K562 (cell line): ENCODE measurements at regions of chrX and their contacts with region 1.

Region 1: DNA sequence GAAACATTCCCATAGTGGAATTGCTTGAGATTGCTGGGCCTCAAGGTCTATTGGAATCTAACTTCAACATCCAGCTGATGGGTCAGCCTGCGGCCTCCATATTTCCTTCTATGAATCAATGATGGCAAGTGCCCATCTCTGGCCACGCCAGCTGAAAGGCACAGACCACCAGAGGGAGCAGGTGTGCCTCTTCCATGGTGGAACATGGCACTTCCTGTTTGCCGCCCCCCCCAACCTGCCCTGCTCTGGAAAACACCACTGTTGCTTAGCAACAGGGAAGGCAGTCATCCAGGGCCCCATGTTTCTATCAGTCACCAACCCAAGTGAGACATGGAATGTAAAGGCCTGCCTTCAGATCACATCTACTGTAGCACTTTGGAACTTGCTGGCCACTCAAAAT is 11.6 kb downstream of the PAGE4 start:
- DNase-seq: peak; percentile 68 to 81 (median 71)
- ATAC-seq: peak; percentile 91
- H3K4me3 ChIP-seq: no peak overlapping the region
- H3K27ac ChIP-seq: no peak overlapping the region
- H3K4me1 ChIP-seq: peaks cover 0 to 10% of the 10 kb centered on the region in 2 experiments; a peak in 2 of 5 replicates
- H3K27me3 ChIP-seq: no peaks in the 10 kb centered on the region
- CTCF ChIP-seq: peak; percentile 80 to 82 (median 82)
- EP300 ChIP-seq: no peak
- POLR2A ChIP-seq: no peak
- RAD21 ChIP-seq: peak; percentile 74 to 80

Region 2: GRCh38 chrX:49761481-49761880 is 79.2 kb before region 1 on chrX:
- CTCF ChIA-PET with region 1: no interaction called
- POLR2A ChIA-PET with region 1: no interaction called
- in situ Hi-C with region 1: no loop called
- intact Hi-C with region 1: loop called (anchors 5 kb)
- DNase-seq: peak; percentile 20 to 32 (median 26)
- ATAC-seq: peak; percentile 74
- H3K4me3 ChIP-seq: no peak overlapping the region
- H3K27ac ChIP-seq: no peak overlapping the region
- H3K4me1 ChIP-seq: no peaks in the 10 kb centered on the region
- H3K27me3 ChIP-seq: no peaks in the 10 kb centered on the region
- CTCF ChIP-seq: peak; percentile 49 to 65 (median 56); a peak in 5 of 6 replicates
- EP300 ChIP-seq: no peak
- POLR2A ChIP-seq: no peak
- RAD21 ChIP-seq: peak; percentile 25 to 56; a peak in 3 of 4 replicates

Region 3: DNA sequence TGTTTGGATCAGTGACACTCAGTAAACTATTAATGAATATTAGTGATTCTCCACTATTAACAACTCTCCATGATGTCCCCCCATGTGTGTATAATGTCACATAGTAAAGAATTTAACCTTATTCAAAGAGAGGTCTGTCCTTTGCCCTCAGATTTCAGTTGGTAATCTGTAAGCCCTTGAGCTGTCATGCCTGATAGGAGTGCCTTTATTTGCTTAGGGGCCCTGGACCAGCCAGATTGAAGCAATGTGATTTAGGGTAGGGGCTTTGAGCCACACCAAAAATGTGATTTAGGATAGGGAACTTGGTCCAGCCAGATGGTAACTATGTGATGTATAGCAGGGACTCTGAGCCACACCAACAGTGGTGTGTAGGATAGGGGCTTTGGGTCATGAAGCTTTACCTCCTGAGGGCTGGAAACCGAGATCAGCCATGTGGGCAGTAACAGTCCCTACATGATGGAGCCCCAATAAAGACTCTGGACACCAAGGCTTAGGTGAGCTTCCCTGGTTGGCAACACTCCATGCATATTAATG is 55.9 kb before region 1 on chrX:
- CTCF ChIA-PET with region 1: no interaction called
- POLR2A ChIA-PET with region 1: no interaction called
- in situ Hi-C with region 1: no loop called
- intact Hi-C with region 1: no loop called
- DNase-seq: no peak
- ATAC-seq: no peak
- H3K4me3 ChIP-seq: no peak overlapping the region
- H3K27ac ChIP-seq: no peak overlapping the region
- H3K4me1 ChIP-seq: no peaks in the 10 kb centered on the region
- H3K27me3 ChIP-seq: no peaks in the 10 kb centered on the region; a peak in 2 of 5 replicates
- CTCF ChIP-seq: no peak
- EP300 ChIP-seq: no peak
- POLR2A ChIP-seq: no peak
- RAD21 ChIP-seq: no peak

Region 4: DNA sequence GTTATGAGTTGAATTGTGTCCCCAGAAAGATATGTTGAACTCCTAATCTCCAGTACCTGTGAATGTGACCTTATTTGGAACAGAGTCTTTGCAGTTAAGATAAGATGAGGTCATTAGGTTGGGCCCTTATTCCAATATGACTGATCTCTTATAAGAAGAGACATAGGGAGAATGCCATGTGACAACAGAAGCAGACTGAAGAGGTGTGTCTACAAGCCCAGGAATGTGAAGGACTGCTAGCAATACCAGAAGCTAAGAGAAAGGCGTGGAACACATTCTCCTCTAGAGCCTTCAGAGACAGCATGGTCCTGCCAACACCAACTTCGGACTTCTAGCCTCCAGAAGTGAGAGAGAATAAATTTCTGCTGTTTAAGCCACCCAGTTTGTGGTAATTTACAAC is 16.1 kb after region 1 on chrX:
- CTCF ChIA-PET with region 1: no interaction called
- POLR2A ChIA-PET with region 1: no interaction called
- in situ Hi-C with region 1: no loop called
- intact Hi-C with region 1: no loop called
- DNase-seq: no peak
- ATAC-seq: no peak
- H3K4me3 ChIP-seq: no peak overlapping the region
- H3K27ac ChIP-seq: no peak overlapping the region
- H3K4me1 ChIP-seq: peaks cover 0 to 15% of the 10 kb centered on the region in 2 experiments; a peak in 2 of 5 replicates
- H3K27me3 ChIP-seq: no peaks in the 10 kb centered on the region
- CTCF ChIP-seq: no peak
- EP300 ChIP-seq: no peak
- POLR2A ChIP-seq: no peak
- RAD21 ChIP-seq: no peak

Region 5: GRCh38 chrX:49876750-49877149 is 36.1 kb after region 1 on chrX:
- CTCF ChIA-PET with region 1: interaction called, 10 read pairs
- POLR2A ChIA-PET with region 1: interaction called, 3 read pairs
- in situ Hi-C with region 1: no loop called
- intact Hi-C with region 1: loop called (anchors 1 kb)
- DNase-seq: peak; percentile 38 to 56 (median 44)
- ATAC-seq: no peak
- H3K4me3 ChIP-seq: no peak overlapping the region
- H3K27ac ChIP-seq: no peak overlapping the region
- H3K4me1 ChIP-seq: peaks cover 0 to 21% of the 10 kb centered on the region in 2 experiments; a peak in 4 of 5 replicates
- H3K27me3 ChIP-seq: peaks cover 0 to 7% of the 10 kb centered on the region in 2 experiments; a peak in 1 of 5 replicates
- CTCF ChIP-seq: peak; percentile 40 to 60 (median 57); a peak in 5 of 6 replicates
- EP300 ChIP-seq: no peak
- POLR2A ChIP-seq: no peak
- RAD21 ChIP-seq: peak; percentile 59

Region 6: DNA sequence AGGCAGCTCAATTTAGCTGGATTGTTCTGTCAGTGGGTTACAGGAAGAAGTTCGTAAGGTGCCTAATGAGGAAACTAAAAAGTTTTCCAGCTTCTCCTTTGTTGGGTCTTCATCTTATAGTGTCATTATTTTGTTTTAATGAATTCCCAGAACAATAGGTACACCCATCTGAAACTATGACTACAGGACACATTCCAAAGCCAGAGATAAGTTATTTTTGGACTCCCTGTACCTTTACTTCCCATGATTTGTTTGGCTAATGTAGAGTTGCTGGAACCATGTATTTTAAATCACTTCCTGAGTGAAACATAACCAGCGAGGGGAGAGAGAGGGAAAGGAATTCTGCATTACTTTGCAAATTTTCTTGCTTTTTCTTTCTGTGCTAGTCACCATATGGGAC is 195.7 kb after region 1 on chrX:
- CTCF ChIA-PET with region 1: no interaction called
- POLR2A ChIA-PET with region 1: no interaction called
- in situ Hi-C with region 1: no loop called
- intact Hi-C with region 1: no loop called
- DNase-seq: no peak
- ATAC-seq: no peak
- H3K4me3 ChIP-seq: no peak overlapping the region
- H3K27ac ChIP-seq: no peak overlapping the region
- H3K4me1 ChIP-seq: no peaks in the 10 kb centered on the region
- H3K27me3 ChIP-seq: no peaks in the 10 kb centered on the region
- CTCF ChIP-seq: no peak
- EP300 ChIP-seq: no peak
- POLR2A ChIP-seq: no peak
- RAD21 ChIP-seq: no peak